PC-9 (cell line): ENCODE measurements at regions of chr3 and their contacts with region 1.

Region 1: DNA sequence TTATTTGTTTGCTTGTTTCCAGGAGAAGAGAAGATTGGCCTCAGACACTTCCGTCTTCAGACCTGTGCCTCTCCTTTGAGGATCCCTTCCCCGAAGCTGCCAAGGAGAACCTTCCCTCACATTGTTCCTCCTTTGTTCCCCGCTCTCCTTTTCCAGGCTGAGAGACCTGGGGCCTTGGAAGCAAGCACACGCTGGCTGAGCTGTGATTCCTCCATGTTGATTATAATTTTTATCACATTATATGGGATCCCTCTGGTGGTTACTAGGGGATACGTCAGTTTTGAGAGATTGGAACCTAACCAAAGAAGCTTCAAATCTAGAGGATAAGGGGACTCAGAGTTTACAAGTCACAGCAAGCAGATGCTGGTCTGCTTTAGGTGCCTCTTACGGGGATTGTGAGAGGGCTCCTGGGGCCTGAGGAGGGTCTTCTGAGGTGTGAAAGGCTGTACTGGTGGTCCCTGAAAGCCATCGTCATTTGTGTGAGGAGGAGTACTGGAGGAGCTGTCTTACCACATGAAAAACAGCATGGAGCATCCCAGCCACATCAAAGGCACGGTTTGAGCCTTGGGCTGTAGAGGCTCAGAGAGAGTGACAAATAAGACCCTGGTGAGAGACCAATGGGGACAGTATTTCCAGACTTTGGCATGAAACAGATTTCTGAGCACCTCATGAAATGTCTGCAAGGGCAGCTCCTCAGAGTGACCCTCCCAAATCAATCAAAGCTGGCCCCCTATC is 760.1 kb upstream of the CFAP20DC start:
- DNase-seq: no peak
- H3K4me3 ChIP-seq: no peak overlapping the region
- H3K27ac ChIP-seq: peak overlapping the region; percentile 89
- H3K4me1 ChIP-seq: peaks cover 17% of the 10 kb centered on the region
- H3K27me3 ChIP-seq: no peaks in the 10 kb centered on the region
- CTCF ChIP-seq: peak; percentile 49

Region 2: GRCh38 chr3:58568572-58569286 is 1241.1 kb before region 1 on chr3:
- CTCF ChIA-PET with region 1: no interaction called
- POLR2A ChIA-PET with region 1: no interaction called
- intact Hi-C with region 1: loop called (anchors 10 kb)
- DNase-seq: peak; percentile 48 to 73
- H3K4me3 ChIP-seq: no peak overlapping the region
- H3K27ac ChIP-seq: no peak overlapping the region
- H3K4me1 ChIP-seq: peaks cover 4% of the 10 kb centered on the region; the same call in 1 of the 2 replicates
- H3K27me3 ChIP-seq: no peaks in the 10 kb centered on the region
- CTCF ChIP-seq: peak; percentile 91

Region 3: DNA sequence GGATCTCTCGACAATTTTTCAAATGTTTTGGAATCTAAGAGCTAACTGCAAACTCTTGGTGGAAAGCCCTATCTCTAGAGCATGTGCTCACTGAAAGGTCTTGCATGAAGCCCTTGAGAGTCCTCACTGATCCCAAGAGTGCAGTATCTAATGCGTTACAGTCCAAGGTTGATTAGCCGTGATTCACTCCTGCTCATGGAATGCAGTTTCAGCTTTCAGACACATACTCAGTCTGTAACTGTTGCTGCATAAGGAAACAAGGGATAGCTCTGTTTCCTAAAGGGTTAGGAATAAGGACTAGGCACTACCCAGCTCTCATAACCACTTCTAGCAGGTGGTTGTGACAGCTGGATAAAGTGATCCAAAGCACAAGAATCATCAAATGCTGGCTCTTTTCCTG is 72.6 kb before region 1 on chr3:
- CTCF ChIA-PET with region 1: no interaction called
- POLR2A ChIA-PET with region 1: no interaction called
- intact Hi-C with region 1: loop called (anchors 2 kb)
- DNase-seq: no peak
- H3K4me3 ChIP-seq: no peak overlapping the region
- H3K27ac ChIP-seq: no peak overlapping the region
- H3K4me1 ChIP-seq: no peaks in the 10 kb centered on the region
- H3K27me3 ChIP-seq: peaks cover 6% of the 10 kb centered on the region; the same call in 1 of the 2 replicates
- CTCF ChIP-seq: no peak